ENCODE measurements at regions of chr11 and their contacts with region 1.

Region 1: GRCh38 chr11:74449369-74449931 is 17.9 kb downstream of the KCNE3 start:
- DNase-seq: no peak
- ATAC-seq: peak; percentile 89

Region 2: DNA sequence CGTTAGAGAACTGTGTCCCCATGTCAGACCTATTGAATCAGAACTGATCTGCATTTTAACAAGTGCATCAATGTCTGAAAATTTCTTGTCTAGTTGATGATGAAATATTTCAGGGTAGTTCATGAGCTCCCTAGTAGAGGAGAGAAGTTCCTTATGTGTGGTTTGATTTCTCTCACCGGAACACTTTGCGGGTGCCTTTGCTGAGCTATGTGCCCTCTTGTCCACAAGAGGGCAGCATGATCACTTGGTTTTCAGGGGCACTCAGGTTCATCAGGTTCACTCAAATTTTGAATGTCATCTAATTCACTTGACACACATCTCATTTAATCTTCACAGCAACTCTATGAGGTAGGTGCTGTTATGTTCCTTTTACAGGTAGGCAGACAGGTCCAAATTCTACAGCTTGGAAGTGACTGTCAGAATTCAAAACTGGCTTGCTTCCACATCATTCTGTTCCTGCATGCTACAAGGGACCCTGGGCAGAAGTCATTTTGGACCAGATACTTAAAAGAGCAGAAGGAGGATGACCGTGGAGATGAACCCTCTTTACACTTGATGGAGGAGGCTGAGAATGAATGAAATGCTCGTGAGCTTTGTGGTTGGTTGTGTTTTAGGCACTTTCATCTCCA is 193.6 kb before region 1 on chr11:
- intact Hi-C with region 1: loop called (anchors 10 kb)
- DNase-seq: no peak
- ATAC-seq: peak; percentile 65

Region 3: DNA sequence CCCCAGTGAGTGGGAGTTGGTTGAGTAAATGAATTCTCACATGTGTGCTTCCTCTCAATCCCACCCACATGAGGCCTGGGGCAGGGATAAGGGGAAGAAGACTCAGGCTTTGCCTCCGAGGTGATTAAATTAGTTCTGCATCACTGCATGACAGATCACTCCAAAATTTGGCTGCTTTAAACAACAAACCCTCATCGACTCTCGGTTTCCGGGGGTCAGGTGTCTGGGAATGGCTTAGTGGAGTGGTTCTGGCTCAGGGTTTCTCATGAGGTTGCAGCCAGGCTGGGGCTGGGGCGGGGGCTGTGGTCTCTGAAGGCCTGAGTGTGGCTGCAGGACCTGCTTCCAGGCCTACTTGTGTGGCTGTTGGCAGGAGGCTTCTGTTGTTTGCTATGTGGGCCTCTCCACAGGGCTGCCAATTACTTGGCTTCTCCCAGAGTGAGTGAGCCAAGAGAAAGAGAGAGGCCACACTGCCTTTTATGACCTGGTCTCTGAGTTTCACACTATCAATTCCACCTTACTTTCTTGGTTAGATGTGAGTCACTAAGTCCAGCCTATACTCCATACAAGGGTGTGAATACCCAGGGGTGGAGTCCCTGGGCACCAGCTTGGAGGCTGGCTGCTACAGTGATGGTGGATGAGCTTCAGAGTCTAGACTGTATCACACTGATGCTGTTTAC is 1284.1 kb after region 1 on chr11:
- intact Hi-C with region 1: no loop called
- DNase-seq: no peak
- ATAC-seq: peak; percentile 52

Measured in sciatic nerve (tissue), 2 donors.